OCI-LY7 (cell line): ENCODE measurements at regions of chr13 and their contacts with region 1.

Region 1: GRCh38 chr13:90594694-90595093 is 752.8 kb upstream of the MIR17HG start:
- DNase-seq: no peak
- H3K4me3 ChIP-seq: no peak overlapping the region
- H3K27ac ChIP-seq: no peak overlapping the region
- H3K4me1 ChIP-seq: no peaks in the 10 kb centered on the region
- CTCF ChIP-seq: no peak

Region 2: DNA sequence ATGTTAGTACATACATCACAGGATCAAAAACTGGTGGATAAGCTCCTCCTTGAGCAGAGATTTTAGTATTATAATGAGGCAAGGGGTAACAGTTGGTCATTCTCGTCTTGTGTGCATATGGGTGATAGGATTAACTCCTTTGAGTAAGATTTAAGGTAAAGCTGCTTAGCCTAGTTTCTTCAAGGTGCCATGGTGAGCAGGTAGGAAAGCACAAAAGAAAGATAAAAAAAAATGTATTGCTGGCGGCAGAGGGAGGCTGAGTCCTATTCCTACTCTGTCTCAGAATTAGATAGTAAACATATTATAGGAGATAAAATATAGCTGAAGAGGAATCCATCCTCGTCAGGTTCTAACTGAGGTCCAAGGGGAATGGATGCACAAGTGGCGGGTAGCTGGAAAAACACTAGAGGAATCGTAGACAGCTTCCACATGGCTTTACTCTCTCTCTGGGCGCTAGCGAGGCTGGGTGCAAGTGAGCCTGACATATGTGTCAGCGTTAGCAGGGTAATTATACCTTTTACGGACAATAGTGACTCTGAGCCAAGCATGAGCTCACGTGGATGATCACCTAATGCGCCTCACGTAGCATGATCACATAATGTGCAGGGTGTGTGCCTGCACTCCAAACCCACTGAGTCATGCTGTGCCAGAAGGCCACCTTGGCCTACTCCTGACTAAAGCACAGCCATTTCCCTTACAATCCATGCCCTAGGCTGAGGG is 18.5 kb after region 1 on chr13:
- CTCF ChIA-PET with region 1: no interaction called
- POLR2A ChIA-PET with region 1: interaction called, 10 read pairs
- intact Hi-C with region 1: no loop called
- DNase-seq: no peak
- H3K4me3 ChIP-seq: no peak overlapping the region
- H3K27ac ChIP-seq: no peak overlapping the region
- H3K4me1 ChIP-seq: no peaks in the 10 kb centered on the region
- CTCF ChIP-seq: no peak